Activated T-helper 1 cell treated with anti-CD3 and anti-CD28 coated beads, Interleukin-12 subunit alpha, Interleukin-12 subunit beta, Interleukin-2, Interleukin-4 antibody, amounts not matched to agents 30 ng/mL and 10 ng/mL and 1 ng/mL, durations not matched to agents 14 hours and 24 hours and 36 hours (primary cell): ENCODE measurements at regions of chr19 and their contacts with region 1.

Region 1: GRCh38 chr19:52269338-52270261 is at the start of gene ZNF766:
- DNase-seq: peak; percentile 96
- H3K4me3 Mint-ChIP-seq: peak within 1 kb of the TSS; percentile 98
- H3K27ac Mint-ChIP-seq: peak within 1 kb of the TSS; percentile 95
- H3K4me1 Mint-ChIP-seq: peaks cover 24% of the 10 kb centered on the region
- H3K27me3 Mint-ChIP-seq: no peaks in the 10 kb centered on the region
- total RNA-seq, gene ZNF766: 13.8 and 16.5 TPM in 2 replicates

Region 2: GRCh38 chr19:52139252-52140031 is 130.2 kb before region 1 on chr19 and contains the start of gene ZNF616:
- intact Hi-C with region 1: loop called (anchors 1 kb)
- DNase-seq: peak; percentile 94
- H3K4me3 Mint-ChIP-seq: peak within 1 kb of the TSS; percentile 98
- H3K27ac Mint-ChIP-seq: peak within 1 kb of the TSS; percentile 94
- H3K4me1 Mint-ChIP-seq: peaks cover 23% of the 10 kb centered on the region
- H3K27me3 Mint-ChIP-seq: no peaks in the 10 kb centered on the region
- total RNA-seq, gene ZNF616: 4.1 and 6.7 TPM in 2 replicates

Region 3: DNA sequence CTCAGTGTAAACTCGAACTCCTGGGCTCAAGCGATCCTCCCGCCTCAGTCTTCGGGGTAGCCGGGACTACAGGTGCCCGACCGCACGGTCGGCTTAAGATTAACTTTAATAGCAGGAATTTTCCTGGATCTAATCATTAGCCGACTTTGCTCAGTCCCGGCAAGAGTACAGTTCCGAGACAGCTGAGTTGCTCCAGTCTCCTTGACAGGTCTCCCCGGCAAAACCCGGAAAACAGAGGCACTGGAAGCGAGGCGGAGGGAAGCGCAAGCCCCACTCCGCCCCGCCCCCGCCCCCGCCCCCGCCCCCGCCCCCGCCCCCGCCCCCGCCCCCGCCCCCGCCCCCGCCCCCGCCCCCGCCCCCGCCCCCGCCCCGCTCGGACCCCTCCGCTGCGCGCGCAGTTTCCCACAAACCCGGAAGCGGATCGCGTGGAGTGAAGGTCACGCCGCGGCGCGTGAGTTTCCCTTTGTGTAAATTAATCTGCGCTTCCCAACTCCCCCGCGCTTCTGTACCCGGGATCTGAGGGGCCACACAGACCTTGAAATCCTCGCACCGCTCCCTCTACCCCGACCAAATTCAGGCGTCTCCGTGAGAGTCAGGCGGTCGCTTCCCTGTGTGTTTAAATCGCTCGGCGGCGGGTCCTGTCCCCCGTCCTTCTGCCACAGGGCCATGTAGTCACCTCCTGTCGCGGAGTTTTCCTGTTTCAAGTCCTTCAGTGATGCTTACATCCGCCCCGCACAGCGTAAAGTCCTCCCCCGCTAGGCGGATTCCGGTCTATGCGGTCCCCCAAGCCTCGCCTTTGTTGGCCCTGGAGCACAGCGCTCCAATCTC is 27.4 kb after region 1 on chr19 and contains the start of gene ZNF480:
- intact Hi-C with region 1: loop called (anchors 1 kb)
- DNase-seq: peak; percentile 74
- H3K4me3 Mint-ChIP-seq: peak within 1 kb of the TSS; percentile 90
- H3K27ac Mint-ChIP-seq: peak within 1 kb of the TSS; percentile 97
- H3K4me1 Mint-ChIP-seq: peaks cover 17% of the 10 kb centered on the region
- H3K27me3 Mint-ChIP-seq: peaks cover 2% of the 10 kb centered on the region
- total RNA-seq, gene ZNF480: 3.5 and 4.8 TPM in 2 replicates

Region 4: GRCh38 chr19:52343548-52343947 is 73.9 kb after region 1 on chr19:
- intact Hi-C with region 1: no loop called
- DNase-seq: peak; percentile 19
- H3K4me3 Mint-ChIP-seq: no peak overlapping the region
- H3K27ac Mint-ChIP-seq: no peak overlapping the region
- H3K4me1 Mint-ChIP-seq: no peaks in the 10 kb centered on the region
- H3K27me3 Mint-ChIP-seq: no peaks in the 10 kb centered on the region

Region 5: GRCh38 chr19:52570000-52570861 is 300.6 kb after region 1 on chr19 and contains the start of gene ZNF701:
- intact Hi-C with region 1: loop called (anchors 1 kb)
- DNase-seq: peak; percentile 94
- H3K4me3 Mint-ChIP-seq: peak within 1 kb of the TSS; percentile 94
- H3K27ac Mint-ChIP-seq: peak within 1 kb of the TSS; percentile 94
- H3K4me1 Mint-ChIP-seq: peaks cover 20% of the 10 kb centered on the region
- H3K27me3 Mint-ChIP-seq: no peaks in the 10 kb centered on the region
- total RNA-seq, gene ZNF701: 16.0 and 18.3 TPM in 2 replicates

Region 6: DNA sequence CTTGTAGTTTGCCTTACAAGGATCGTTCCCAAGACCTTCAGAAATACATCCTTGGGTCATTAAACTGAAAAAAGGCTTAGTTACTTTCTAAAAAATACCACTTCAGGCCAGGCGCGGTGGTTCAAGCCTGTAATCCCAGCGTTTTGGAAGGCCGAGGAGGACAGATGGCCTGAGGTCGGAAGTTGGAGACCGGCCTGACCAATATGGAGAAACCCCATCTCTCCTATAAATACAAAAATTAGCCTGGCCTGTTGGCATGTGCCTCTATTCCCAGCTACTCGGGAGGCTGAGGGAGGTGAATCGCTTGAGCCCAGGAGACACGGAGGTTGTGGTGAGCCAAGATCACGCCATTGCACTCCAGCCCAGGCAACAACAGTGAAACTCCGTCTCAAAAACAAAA is 554.1 kb after region 1 on chr19:
- intact Hi-C with region 1: loop called (anchors 1 kb)
- DNase-seq: no peak
- H3K4me3 Mint-ChIP-seq: no peak overlapping the region
- H3K27ac Mint-ChIP-seq: no peak overlapping the region
- H3K4me1 Mint-ChIP-seq: peaks cover 9% of the 10 kb centered on the region
- H3K27me3 Mint-ChIP-seq: no peaks in the 10 kb centered on the region

Region 7: DNA sequence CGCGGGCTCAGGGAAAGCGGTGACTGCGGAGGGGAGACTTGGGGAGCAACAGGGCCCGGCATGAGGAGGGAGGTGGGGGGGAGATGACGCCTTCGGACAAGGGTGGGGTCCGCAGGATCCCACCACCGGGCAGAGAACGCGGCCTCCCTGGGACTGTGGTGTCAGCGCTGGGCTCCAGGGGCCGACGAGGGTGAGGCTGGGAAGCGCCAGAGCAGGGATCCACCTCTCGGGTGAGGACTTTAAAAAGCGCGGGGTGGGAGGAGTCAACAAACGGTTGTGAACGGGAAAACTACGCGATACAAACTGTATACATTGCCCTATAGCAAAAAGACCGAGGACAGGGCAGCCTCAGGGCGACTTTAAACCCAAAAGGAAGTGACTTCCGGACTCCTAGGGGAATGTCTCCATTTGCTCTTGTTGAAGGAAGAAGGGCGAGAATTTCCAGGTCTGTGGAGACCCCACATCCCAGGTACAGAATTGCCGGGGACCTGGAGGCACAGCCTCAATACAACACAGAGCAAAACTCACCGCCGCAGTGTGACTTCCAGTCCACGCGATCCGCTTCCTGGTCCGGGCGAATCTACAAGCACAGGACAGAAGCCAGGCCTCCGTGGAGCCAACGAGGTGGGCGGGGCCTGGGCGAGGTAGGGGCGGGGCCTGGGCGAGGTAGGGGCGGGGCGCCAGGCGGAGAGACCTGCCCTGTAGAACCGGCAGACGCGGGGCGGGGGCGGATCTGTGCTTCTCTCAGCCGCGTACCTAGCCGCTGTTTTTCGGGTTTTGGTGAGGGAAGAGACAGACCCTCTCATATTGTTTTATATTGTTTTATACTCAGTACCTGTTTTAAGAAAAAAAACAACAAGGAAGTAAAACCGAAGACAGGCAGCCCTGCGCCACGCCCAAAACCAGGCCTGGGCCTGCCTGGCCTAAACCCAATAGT is 653.5 kb after region 1 on chr19 and contains the start of gene ZNF888:
- intact Hi-C with region 1: loop called (anchors 2 kb)
- DNase-seq: peak; percentile 77
- H3K4me3 Mint-ChIP-seq: peak within 1 kb of the TSS; percentile 93
- H3K27ac Mint-ChIP-seq: peak within 1 kb of the TSS; percentile 96
- H3K4me1 Mint-ChIP-seq: peaks cover 31% of the 10 kb centered on the region
- H3K27me3 Mint-ChIP-seq: no peaks in the 10 kb centered on the region
- total RNA-seq, gene ZNF888: 4.2 and 4.6 TPM in 2 replicates